Left lung (tissue), 14 donors: ENCODE measurements at regions of chr12 and their contacts with region 1.

Region 1: DNA sequence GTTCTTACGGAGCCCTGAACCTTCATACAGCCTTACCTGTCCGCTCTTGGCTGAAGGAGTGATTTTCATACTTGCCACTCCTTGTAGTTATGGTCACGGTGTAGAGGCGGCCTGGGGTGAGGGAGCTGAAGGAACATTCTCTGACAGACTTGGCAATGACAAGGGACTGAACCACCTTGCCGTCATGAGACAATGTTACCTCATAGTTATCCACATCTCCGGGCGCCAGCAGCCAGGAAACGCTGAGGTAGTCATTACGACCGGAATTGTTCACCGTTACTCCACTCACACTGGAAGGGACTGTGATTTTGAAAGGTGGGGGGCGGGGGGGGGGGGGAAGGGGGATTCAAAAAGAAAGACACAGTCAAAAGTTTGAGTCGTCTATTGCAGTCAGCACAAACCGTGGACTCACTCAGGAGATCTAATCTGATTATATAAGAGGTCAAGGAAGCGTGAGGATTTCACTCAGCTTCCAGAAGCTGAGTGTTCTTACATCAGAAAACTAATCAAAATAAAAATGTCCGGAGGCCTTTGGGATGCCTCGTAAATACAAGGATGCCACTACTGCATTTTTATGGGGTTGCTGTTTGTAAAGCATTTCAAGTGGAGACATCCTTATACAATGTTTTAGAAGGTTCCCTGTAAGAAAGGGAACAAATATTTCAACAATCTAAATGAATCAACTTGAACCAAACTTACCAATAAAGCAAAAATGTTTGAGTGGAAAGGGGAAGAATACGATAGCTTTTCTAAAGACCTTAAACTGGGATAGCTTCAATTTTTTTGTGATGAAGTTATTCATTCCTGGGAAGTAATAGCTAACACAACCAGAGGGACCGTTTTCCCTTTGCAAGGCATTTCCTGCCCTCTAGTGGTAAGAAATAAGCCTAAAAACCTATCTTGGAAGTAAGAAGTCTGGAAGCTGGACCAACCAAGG is 60.6 kb downstream of the PTPRB start:
- DNase-seq: peak in 2 of 4 donors; percentile 63 to 76
- ATAC-seq: peak; percentile 92
- H3K4me3 ChIP-seq: no peak overlapping the region
- H3K27ac ChIP-seq: no peak overlapping the region
- H3K4me1 ChIP-seq: no peaks in the 10 kb centered on the region
- H3K27me3 ChIP-seq: no peaks in the 10 kb centered on the region
- CTCF ChIP-seq: peak; percentile 63 to 69

Region 2: GRCh38 chr12:69880571-69880970 is 696.0 kb before region 1 on chr12:
- intact Hi-C with region 1: loop called in 1 of 2 experiments (anchors 5 kb)
- DNase-seq: no peak
- ATAC-seq: no peak
- H3K4me3 ChIP-seq: no peak overlapping the region
- H3K27ac ChIP-seq: no peak overlapping the region
- H3K4me1 ChIP-seq: peaks cover 0 to 6% of the 10 kb centered on the region in 2 donors
- H3K27me3 ChIP-seq: no peaks in the 10 kb centered on the region
- CTCF ChIP-seq: no peak

Region 3: DNA sequence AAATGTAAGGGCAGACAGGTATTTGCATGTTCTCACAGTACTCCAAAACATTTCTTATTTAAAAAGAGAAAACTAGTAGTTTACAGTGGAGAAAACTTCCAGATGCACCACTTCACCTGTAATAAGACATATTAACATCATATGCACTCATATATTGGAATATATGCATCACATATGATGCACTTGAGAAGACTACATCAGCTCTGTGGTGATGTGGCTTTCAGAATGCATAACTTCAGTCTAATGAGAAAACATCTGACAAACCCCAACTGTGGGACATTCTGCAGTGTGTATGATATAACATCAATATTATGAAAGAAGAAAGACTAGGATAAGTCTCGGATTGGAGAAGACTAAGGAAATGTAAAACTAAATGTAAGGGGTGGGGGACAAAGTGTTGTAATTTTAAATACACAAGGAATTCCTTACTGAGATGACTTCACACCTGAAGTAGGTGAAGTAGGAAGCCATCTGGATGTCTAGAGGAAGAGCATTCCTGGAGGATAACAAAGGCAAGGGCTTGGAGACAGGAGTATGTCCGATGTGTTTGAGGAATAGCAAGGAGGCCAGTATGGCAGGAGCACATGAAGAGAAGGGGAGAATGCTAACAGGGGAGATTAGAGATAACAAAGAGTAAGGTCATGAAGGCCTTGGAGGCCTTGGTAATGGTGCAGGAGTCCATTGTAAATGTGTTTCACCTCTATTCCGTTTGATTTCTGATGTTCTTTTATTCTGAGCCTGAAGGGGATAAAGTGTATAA is 284.4 kb before region 1 on chr12:
- intact Hi-C with region 1: no loop called
- DNase-seq: no peak
- ATAC-seq: no peak
- H3K4me3 ChIP-seq: no peak overlapping the region
- H3K27ac ChIP-seq: no peak overlapping the region
- H3K4me1 ChIP-seq: peaks cover 5 to 11% of the 10 kb centered on the region in 2 donors
- H3K27me3 ChIP-seq: no peaks in the 10 kb centered on the region
- CTCF ChIP-seq: no peak

Region 4: DNA sequence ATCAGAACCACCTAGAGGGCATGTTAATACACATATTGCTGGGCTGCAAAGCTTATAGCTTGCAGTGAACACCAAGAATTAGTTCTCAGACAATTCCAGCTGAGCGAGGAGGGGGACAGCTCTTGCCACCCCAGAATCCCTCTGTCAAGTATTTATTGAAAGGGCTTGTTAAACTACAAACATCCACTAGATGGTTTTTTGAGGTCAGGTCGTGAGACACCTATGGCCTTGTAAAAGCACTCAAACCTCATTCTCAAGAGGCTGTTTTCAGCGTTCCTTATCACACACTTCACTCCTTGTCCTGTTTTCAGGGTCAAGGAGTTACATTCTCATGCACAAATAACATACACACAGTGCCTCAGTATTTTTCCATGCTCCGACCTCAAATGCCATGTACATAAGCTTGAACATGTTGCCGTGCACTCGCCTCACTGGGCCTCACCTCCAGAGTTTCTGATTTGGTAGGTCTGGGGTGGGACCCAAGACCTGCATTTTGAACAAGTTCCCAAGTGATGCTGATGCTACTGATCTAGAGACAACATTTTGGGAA is 442.7 kb after region 1 on chr12:
- intact Hi-C with region 1: no loop called
- DNase-seq: no peak
- ATAC-seq: peak; percentile 81
- H3K4me3 ChIP-seq: no peak overlapping the region
- H3K27ac ChIP-seq: no peak overlapping the region
- H3K4me1 ChIP-seq: no peaks in the 10 kb centered on the region
- H3K27me3 ChIP-seq: peaks cover 7 to 22% of the 10 kb centered on the region in 2 donors
- CTCF ChIP-seq: no peak